ENCODE measurements at regions of chr22 and their contacts with region 1.

Region 1: GRCh38 chr22:33920927-33921524 is 750 bp upstream of the LARGE1 start:
- DNase-seq: peak; percentile 79
- H3K4me3 ChIP-seq: peak overlapping the region; percentile 56
- H3K27me3 ChIP-seq: no peaks in the 10 kb centered on the region; the same call in 1 of the 2 replicates
- CTCF ChIP-seq: no peak

Region 2: DNA sequence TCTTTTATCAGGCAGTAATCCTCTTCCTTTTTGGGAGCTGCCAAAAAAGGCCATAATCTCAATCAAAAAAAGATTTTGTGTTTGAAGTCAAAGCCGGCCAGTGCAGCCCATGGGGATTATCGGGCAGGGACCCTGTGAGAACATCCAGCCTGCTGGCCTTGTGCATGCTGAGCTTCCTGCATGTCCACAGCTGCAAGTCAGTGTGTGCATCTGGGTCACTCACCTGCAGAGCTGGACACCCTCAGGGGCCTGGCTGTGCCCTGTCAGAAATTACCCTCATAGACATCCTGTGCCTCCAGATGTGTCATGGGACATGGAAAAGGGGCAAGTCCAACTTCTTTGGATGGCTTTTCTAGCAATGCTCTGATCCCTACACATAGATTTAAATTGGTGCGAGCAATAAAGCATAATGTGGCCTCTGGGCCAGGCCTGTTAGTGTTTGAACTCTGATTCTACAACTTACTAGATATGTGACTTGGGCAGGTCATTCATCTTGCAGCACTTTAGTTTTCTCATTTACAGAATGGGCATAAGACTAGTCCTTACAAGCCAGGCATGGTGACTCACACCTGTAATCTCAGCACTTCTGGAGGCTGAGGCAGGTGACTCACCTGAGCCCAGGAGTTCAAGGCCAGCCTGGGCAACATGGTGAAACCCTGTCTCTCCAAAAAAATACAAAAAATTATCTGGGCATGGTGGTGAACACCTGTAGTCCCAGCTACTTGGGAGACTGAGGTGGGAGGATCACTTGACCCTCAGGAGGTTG is 80.9 kb after region 1 on chr22:
- CTCF ChIA-PET with region 1: no interaction called
- POLR2A ChIA-PET with region 1: no interaction called
- DNase-seq: no peak
- H3K4me3 ChIP-seq: no peak overlapping the region
- H3K27me3 ChIP-seq: no peaks in the 10 kb centered on the region
- CTCF ChIP-seq: no peak

Region 3: GRCh38 chr22:35150183-35151107 is 1229.4 kb after region 1 on chr22:
- CTCF ChIA-PET with region 1: interaction called, 25 read pairs
- POLR2A ChIA-PET with region 1: no interaction called
- DNase-seq: no peak
- H3K4me3 ChIP-seq: no peak overlapping the region
- H3K27me3 ChIP-seq: peaks cover 2% of the 10 kb centered on the region; the same call in 1 of the 2 replicates
- CTCF ChIP-seq: peak; percentile 79